ENCODE measurements at regions of chr6 and their contacts with region 1.

Region 1: DNA sequence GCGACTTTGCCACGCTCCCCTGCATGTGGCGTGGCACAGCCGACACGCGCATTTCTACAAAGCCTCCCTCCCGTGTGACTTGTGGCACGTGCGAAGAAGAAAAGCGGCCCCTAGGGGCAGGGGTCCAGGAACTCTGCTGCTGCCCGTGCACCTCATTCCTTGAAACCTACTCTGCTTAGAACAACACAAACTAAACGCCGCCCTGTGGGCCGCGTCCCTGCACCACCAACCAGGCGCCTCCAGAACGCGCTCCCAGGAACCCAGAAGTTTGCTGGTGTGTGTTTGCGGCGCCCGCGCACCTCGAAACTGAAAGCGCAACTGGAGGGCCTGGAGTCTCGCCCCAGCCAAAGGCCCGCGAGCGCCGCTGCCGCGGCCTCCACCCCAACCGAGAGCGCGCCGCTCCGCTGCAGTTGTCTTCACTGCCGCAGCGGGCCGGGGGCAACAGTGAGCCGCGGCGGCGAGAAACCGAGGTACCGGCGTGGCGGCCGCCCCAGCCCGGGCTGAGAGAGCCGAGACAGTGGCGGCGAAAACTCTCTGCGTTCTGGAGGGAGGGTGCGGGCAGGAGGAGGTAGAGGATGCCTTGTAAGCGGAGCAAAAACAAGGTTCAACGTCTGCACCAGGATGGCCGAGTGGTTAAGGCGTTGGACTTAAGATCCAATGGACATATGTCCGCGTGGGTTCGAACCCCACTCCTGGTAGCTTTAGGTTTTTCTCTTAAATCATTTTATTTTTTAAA is 65.8 kb downstream of the STX11 start:
- DNase-seq: peak; percentile 97
- ATAC-seq: peak; percentile 84
- H3K4me3 ChIP-seq: peak overlapping the region; percentile 76 to 85 (median 77)
- H3K4me3 Mint-ChIP-seq: peak overlapping the region; percentile 98
- H3K27ac ChIP-seq: peak overlapping the region; percentile 83
- H3K27ac Mint-ChIP-seq: peak overlapping the region; percentile 100
- H3K4me1 ChIP-seq: peaks cover 23 to 30% of the 10 kb centered on the region in 2 donors
- H3K4me1 Mint-ChIP-seq: peaks cover 40% of the 10 kb centered on the region
- H3K27me3 ChIP-seq: no peaks in the 10 kb centered on the region
- H3K27me3 Mint-ChIP-seq: peaks cover 3% of the 10 kb centered on the region
- CTCF ChIP-seq: peak; percentile 72

Region 2: GRCh38 chr6:143450453-143451371 is 765.4 kb before region 1 on chr6 and contains the starts of genes ADAT2 and PEX3:
- CTCF ChIA-PET with region 1: no interaction called
- POLR2A ChIA-PET with region 1: no interaction called
- intact Hi-C with region 1: loop called (anchors 5 kb)
- DNase-seq: peak; percentile 96
- ATAC-seq: peak; percentile 95
- H3K4me3 ChIP-seq: peak within 1 kb of the TSS; percentile 69 to 95 (median 87)
- H3K4me3 Mint-ChIP-seq: peak within 1 kb of the TSS; percentile 95
- H3K27ac ChIP-seq: peak within 1 kb of the TSS; percentile 59 to 82
- H3K27ac Mint-ChIP-seq: peak within 1 kb of the TSS; percentile 94
- H3K4me1 ChIP-seq: peaks cover 15 to 18% of the 10 kb centered on the region in 2 donors
- H3K4me1 Mint-ChIP-seq: peaks cover 33% of the 10 kb centered on the region
- H3K27me3 ChIP-seq: no peaks in the 10 kb centered on the region
- H3K27me3 Mint-ChIP-seq: no peaks in the 10 kb centered on the region
- CTCF ChIP-seq: no peak
- total RNA-seq, gene ADAT2: 15.2 and 16.0 TPM in 2 replicates
- total RNA-seq, gene PEX3: 23.2 and 31.1 TPM in 2 replicates

Region 3: DNA sequence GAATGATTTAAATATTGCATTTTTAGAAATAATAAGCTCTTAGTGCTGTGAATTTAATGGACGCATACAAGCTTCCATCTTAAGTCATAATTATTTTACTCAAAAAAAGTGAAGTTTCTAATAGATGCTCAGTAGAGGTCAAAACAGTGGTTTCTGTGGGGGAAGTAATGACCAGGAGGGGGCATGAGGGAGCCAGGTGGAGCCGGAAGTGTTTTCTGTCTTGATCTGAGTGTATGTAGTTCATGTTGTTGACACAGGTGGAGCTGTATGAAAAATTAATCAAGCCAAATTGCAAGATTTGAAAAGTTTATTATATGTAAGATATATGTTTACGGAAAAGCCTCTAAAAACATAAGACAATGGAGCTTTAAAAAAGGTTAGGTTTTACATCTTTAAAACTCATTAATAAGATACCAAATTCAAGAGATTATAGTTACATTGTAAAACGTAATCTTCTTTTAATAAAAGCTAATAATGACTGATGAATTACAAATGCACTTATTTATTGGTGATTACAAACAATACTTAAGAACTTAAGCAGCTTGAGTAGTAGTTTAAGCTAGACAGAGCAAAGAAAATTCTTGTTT is 276.0 kb before region 1 on chr6:
- CTCF ChIA-PET with region 1: interaction called, 7 read pairs
- POLR2A ChIA-PET with region 1: no interaction called
- intact Hi-C with region 1: loop called (anchors 5 kb)
- DNase-seq: peak; percentile 74
- ATAC-seq: peak; percentile 98
- H3K4me3 ChIP-seq: no peak overlapping the region
- H3K4me3 Mint-ChIP-seq: no peak overlapping the region
- H3K27ac ChIP-seq: no peak overlapping the region
- H3K27ac Mint-ChIP-seq: no peak overlapping the region
- H3K4me1 ChIP-seq: no peaks in the 10 kb centered on the region
- H3K4me1 Mint-ChIP-seq: peaks cover 3% of the 10 kb centered on the region
- H3K27me3 ChIP-seq: no peaks in the 10 kb centered on the region
- H3K27me3 Mint-ChIP-seq: no peaks in the 10 kb centered on the region
- CTCF ChIP-seq: peak; percentile 92

Region 4: DNA sequence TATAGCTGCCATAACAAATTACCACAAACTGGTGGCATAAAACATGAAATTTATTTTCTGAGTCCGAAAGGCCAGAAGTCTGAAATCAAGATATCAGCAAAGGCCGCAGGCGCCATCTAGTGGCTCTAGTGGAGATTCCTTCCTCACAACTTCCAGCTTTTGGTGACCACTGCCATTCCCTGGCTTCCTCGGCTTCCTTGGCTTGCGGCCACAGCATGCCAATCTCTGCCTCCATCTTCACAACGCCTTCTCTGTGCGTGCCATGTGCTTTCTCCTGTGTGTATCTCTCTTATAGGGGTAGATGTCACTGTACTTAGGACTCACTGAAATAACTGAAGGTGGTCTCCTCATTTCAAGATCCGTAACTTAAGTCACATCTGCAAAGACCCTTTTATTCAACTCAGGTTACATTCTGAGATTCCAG is 202.6 kb before region 1 on chr6:
- CTCF ChIA-PET with region 1: no interaction called
- POLR2A ChIA-PET with region 1: no interaction called
- intact Hi-C with region 1: no loop called
- DNase-seq: peak; percentile 68
- ATAC-seq: no peak
- H3K4me3 ChIP-seq: no peak overlapping the region
- H3K4me3 Mint-ChIP-seq: no peak overlapping the region
- H3K27ac ChIP-seq: no peak overlapping the region
- H3K27ac Mint-ChIP-seq: no peak overlapping the region
- H3K4me1 ChIP-seq: no peaks in the 10 kb centered on the region
- H3K4me1 Mint-ChIP-seq: peaks cover 5% of the 10 kb centered on the region
- H3K27me3 ChIP-seq: peaks cover 0 to 2% (median 0%) of the 10 kb centered on the region in 4 experiments
- H3K27me3 Mint-ChIP-seq: no peaks in the 10 kb centered on the region
- CTCF ChIP-seq: peak; percentile 98

Region 5: GRCh38 chr6:144104898-144105487 is 111.1 kb before region 1 on chr6:
- CTCF ChIA-PET with region 1: interaction called, 72 read pairs
- POLR2A ChIA-PET with region 1: interaction called, 9 read pairs
- intact Hi-C with region 1: loop called (anchors 1 kb)
- DNase-seq: peak; percentile 81
- ATAC-seq: peak; percentile 80
- H3K4me3 ChIP-seq: no peak overlapping the region
- H3K4me3 Mint-ChIP-seq: no peak overlapping the region
- H3K27ac ChIP-seq: no peak overlapping the region
- H3K27ac Mint-ChIP-seq: no peak overlapping the region
- H3K4me1 ChIP-seq: no peaks in the 10 kb centered on the region
- H3K4me1 Mint-ChIP-seq: no peaks in the 10 kb centered on the region
- H3K27me3 ChIP-seq: no peaks in the 10 kb centered on the region
- H3K27me3 Mint-ChIP-seq: no peaks in the 10 kb centered on the region
- CTCF ChIP-seq: peak; percentile 84

Region 6: DNA sequence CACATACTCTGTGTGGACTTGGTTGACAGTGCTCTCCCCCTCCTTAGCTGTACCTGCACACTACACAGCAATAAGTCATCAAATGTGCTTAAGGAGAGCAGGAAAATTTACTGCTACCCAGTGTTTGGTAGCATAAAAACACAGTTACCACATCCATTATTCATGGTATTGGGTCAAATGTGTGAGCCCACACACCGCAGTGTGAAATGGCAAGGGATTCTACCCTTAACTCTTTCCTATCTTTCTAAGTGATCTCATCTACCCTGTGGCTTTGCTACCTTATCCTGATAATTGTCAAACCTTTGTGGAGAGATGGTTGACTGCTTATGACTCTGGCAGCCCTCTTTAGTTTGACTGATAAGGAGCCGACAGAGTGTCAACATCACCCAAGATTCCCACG is 18.2 kb before region 1 on chr6:
- CTCF ChIA-PET with region 1: no interaction called
- POLR2A ChIA-PET with region 1: no interaction called
- intact Hi-C with region 1: no loop called
- DNase-seq: no peak
- ATAC-seq: no peak
- H3K4me3 ChIP-seq: no peak overlapping the region
- H3K4me3 Mint-ChIP-seq: no peak overlapping the region
- H3K27ac ChIP-seq: no peak overlapping the region
- H3K27ac Mint-ChIP-seq: no peak overlapping the region
- H3K4me1 ChIP-seq: no peaks in the 10 kb centered on the region
- H3K4me1 Mint-ChIP-seq: peaks cover 2% of the 10 kb centered on the region
- H3K27me3 ChIP-seq: no peaks in the 10 kb centered on the region
- H3K27me3 Mint-ChIP-seq: peaks cover 2% of the 10 kb centered on the region
- CTCF ChIP-seq: no peak

Region 7: DNA sequence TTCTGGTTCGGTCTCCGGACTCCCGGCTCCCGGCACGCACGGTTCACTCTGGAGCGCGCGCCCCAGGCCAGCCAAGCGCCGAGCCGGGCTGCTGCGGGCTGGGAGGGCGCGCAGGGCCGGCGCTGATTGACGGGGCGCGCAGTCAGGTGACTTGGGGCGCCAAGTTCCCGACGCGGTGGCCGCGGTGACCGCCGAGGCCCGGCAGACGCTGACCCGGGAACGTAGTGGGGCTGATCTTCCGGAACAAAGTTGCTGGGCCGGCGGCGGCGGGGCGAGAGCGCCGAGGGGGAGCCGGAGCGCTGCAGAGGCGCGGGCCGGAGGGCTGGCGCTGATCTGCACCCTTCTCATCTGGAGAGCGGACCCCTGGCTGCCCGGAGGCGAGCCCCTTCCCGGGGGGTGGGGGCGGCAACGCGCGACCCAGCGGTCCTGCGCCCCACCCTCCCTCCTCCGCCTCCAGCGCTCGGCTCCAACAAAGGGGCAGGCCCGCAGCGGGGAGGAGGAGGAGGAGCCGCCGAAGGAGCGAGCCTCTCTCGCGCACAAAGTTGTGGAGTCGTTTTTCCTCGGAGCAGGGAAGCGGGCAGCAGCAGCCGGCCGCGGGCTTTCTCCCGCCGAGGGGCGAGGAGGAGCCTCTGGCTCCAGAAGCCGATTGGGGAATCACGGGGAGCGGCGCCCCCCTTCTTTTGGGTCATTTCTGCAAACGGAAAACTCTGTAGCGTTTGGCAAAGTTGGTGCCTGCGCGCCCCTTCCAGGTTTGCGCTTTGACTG is 68.9 kb after region 1 on chr6 and contains the start of gene UTRN:
- CTCF ChIA-PET with region 1: interaction called, 3 read pairs
- POLR2A ChIA-PET with region 1: no interaction called
- intact Hi-C with region 1: loop called (anchors 1 kb)
- DNase-seq: peak; percentile 64
- ATAC-seq: peak; percentile 50
- H3K4me3 ChIP-seq: peak within 1 kb of the TSS; percentile 72 to 90 (median 77)
- H3K4me3 Mint-ChIP-seq: peak within 1 kb of the TSS; percentile 97
- H3K27ac ChIP-seq: no peak within 1 kb of the TSS
- H3K27ac Mint-ChIP-seq: peak within 1 kb of the TSS; percentile 53
- H3K4me1 ChIP-seq: peaks cover 20% of the 10 kb centered on the region in 2 donors
- H3K4me1 Mint-ChIP-seq: peaks cover 19% of the 10 kb centered on the region
- H3K27me3 ChIP-seq: peaks cover 0 to 23% (median 5%) of the 10 kb centered on the region in 4 experiments
- H3K27me3 Mint-ChIP-seq: peaks cover 21% of the 10 kb centered on the region
- CTCF ChIP-seq: no peak
- total RNA-seq, gene UTRN: 213 and 224 TPM in 2 replicates

Region 8: GRCh38 chr6:145814501-145815308 is 1598.6 kb after region 1 on chr6 and contains the start of gene FBXO30:
- CTCF ChIA-PET with region 1: no interaction called
- POLR2A ChIA-PET with region 1: no interaction called
- intact Hi-C with region 1: loop called (anchors 5 kb)
- DNase-seq: peak; percentile 93
- ATAC-seq: peak; percentile 91
- H3K4me3 ChIP-seq: peak within 1 kb of the TSS; percentile 60 to 94 (median 90)
- H3K4me3 Mint-ChIP-seq: peak within 1 kb of the TSS; percentile 96
- H3K27ac ChIP-seq: peak within 1 kb of the TSS; percentile 76 to 89
- H3K27ac Mint-ChIP-seq: peak within 1 kb of the TSS; percentile 96
- H3K4me1 ChIP-seq: peaks cover 26 to 32% of the 10 kb centered on the region in 2 donors
- H3K4me1 Mint-ChIP-seq: peaks cover 44% of the 10 kb centered on the region
- H3K27me3 ChIP-seq: no peaks in the 10 kb centered on the region
- H3K27me3 Mint-ChIP-seq: no peaks in the 10 kb centered on the region
- CTCF ChIP-seq: peak; percentile 18
- total RNA-seq, gene FBXO30: 9.7 and 10.2 TPM in 2 replicates

Measured in B cell (primary cell).